ENCODE measurements at regions of chr17 and their contacts with region 1.

Region 1: DNA sequence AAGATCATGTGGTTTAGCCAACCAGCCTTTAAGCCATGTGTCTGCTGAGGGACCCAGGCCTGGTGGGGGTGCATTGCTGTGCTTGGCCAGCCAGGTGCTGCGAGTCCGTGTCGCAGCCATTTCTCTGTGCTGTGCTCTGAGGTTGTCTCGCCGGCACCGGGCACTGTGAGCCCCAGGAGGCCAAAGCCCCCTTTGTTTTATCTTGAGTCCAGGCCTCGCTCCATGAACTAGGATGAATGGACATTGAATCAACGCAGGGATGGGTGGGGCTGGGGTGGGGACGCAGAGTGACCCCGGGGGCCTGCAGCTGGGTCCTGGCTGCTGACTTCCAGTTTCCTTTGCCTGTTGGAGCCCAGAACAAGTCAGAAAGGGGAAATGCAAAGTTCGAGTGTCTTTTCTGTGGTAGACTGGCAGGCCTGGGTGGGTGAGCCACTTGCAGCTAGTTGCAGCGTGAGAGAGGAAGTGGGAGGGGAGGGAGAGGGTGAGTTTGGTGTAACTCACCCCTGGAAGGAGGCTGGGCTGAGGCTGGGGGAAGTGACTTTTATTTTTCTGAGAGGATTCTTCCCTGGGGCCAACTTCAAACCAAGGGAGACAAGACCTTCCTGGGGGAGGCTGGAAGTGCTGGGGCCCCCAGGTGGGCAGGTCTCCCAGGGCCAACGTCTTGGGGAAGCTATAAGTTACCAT is 324.7 kb downstream of the SEC14L1 start:
- DNase-seq: peak; percentile 96
- H3K4me3 ChIP-seq: peak overlapping the region; percentile 52
- H3K27ac ChIP-seq: peak overlapping the region; percentile 95
- H3K4me1 ChIP-seq: peaks cover 97% of the 10 kb centered on the region
- CTCF ChIP-seq: no peak

Region 2: GRCh38 chr17:77365584-77366186 is 99.8 kb before region 1 on chr17:
- CTCF ChIA-PET with region 1: no interaction called
- POLR2A ChIA-PET with region 1: no interaction called
- intact Hi-C with region 1: no loop called
- DNase-seq: no peak
- H3K4me3 ChIP-seq: no peak overlapping the region
- H3K27ac ChIP-seq: no peak overlapping the region
- H3K4me1 ChIP-seq: peaks cover 30% of the 10 kb centered on the region
- CTCF ChIP-seq: no peak

Region 3: DNA sequence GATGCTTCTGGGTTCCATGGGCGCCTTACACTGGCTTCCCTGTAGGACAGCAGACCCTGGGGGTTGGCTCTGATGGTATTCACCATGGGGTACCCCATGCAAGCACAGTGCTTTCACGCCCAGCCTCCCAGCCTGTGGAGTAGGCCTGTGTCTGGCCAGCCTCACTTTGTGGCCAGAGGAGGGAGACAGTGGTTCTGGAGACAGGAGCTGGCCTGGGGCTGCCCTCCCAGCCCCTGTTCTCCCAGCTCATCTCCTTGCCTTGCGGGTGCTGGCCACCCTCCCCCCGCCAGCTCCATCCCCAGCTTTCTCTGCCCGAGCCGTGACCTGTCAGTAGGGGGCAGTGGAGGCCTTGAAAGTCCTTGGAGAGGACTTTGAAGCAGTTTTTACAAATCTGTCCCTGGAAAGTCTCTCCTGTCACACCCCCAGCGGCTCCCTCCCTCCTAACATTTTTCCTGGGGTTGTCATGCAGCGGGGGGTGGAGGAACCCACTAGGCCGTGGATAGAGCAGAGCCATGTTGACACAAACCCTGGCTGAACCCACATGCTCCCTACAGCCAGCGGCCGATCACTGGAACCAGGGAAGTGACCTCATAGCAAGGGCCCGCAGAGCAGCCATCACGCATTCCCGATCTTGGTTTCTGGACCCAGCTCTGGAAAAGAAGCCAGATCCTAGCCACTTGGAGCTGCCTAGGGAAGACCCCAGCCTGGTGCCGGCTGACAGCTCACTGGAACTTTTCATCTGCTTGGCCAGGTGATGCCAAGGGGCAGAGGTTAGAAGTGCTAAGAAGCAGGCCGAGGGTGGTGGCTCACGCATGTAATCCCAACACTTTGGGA is 35.4 kb before region 1 on chr17:
- CTCF ChIA-PET with region 1: interaction called, 6 read pairs
- POLR2A ChIA-PET with region 1: interaction called, 18 read pairs
- intact Hi-C with region 1: no loop called
- DNase-seq: peak; percentile 89
- H3K4me3 ChIP-seq: peak overlapping the region; percentile 15
- H3K27ac ChIP-seq: peak overlapping the region; percentile 65
- H3K4me1 ChIP-seq: peaks cover 100% of the 10 kb centered on the region
- CTCF ChIP-seq: peak; percentile 99

Region 4: DNA sequence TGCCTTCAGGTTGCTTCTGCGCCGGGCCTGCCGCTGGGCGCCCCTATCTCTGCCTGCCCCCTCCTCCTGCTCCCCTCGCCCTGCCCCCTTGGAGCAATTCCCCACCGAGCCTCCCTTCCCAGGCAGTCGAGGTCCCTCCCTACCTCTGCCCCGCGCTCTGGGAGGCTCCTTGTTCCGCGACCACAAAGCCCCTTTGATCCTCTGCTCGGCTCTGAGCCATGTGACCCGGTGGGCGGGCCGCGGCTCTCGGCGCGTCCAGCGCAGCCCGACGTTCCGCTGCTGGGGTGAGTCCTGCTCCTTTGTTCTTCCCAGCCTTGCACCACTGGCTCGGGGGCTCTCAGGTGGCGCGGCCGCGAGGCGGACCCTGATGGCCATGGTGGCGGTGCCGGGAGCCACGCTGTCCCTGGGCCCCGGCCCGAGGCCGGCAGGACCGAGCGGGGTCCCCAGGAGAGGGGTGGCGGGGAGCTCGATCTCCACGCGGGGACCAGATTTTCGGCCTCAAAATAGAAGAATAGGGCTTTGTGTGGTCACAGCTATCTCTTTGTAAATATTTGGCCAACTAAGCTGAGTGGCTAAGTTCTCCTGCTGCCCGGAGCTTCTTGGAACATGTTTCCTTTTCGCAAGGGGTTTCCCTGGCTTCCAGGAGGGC is 14.1 kb before region 1 on chr17:
- CTCF ChIA-PET with region 1: interaction called, 5 read pairs
- POLR2A ChIA-PET with region 1: interaction called, 60 read pairs
- intact Hi-C with region 1: no loop called
- DNase-seq: peak; percentile 84
- H3K4me3 ChIP-seq: peak overlapping the region; percentile 76
- H3K27ac ChIP-seq: peak overlapping the region; percentile 95
- H3K4me1 ChIP-seq: peaks cover 69% of the 10 kb centered on the region
- CTCF ChIP-seq: no peak

Region 5: GRCh38 chr17:77476931-77477877 is 11.7 kb after region 1 on chr17:
- CTCF ChIA-PET with region 1: interaction called, 4 read pairs
- POLR2A ChIA-PET with region 1: interaction called, 24 read pairs
- intact Hi-C with region 1: loop called (anchors 2 kb)
- DNase-seq: peak; percentile 70
- H3K4me3 ChIP-seq: peak overlapping the region; percentile 13
- H3K27ac ChIP-seq: peak overlapping the region; percentile 91
- H3K4me1 ChIP-seq: peaks cover 81% of the 10 kb centered on the region
- CTCF ChIP-seq: no peak

Measured in OCI-LY7 (cell line).